ENCODE measurements at regions of chr19 and their contacts with region 1.

Region 1: GRCh38 chr19:56403764-56404704 is at the start of gene ZNF583:
- DNase-seq: peak; percentile 98
- H3K4me3 ChIP-seq: peak within 1 kb of the TSS; percentile 42 to 81 (median 53)
- H3K27ac ChIP-seq: peak within 1 kb of the TSS; percentile 57
- H3K4me1 ChIP-seq: peaks cover 8% of the 10 kb centered on the region
- H3K27me3 ChIP-seq: no peaks in the 10 kb centered on the region
- CTCF ChIP-seq: no peak
- POLR2A ChIP-seq: peak; percentile 32
- total RNA-seq, gene ZNF583: 2.4 and 4.8 TPM in 2 replicates

Region 2: DNA sequence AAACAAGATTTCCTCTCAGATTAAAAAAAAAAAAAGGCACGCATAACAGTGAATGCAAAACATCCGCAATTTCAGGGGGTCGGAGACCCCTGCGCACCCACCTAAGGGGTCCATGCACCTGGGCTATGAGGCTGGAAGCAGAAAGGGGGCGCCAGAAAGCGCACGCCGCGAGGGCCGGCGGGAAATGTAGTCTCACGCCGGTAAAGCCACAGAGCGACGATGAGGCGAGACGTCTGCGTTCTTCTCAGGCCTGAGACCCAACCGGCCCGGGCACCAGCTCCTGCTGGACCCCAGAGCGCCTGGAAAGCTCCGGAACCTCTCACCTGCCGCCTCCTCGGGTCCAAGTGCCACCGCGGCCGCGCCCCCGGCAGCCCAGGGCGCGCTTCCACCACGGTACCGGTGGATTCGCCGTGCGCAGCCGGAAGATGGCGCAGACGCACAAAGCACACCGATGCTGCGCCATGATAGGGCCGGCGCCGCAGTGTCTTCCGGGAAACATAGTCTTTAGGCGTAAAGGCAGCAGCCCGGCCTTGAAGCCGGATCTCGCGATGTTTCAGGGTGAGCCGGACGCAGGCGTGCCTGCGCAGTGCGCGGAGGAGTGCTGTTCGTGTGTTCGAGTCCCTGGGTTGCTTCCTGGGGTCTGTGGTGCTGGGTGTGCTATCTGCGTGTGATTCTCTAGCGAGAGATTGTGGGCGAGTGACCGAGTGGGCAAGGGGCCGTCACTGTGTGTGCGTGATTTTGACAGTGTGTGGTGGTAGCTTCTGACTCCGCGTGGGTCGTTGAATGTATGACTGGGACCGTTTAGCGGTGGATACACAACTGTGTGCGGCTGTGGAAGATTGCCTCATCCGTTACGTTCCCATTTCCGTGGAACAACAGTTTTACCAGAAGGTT is 10.7 kb before region 1 on chr19 and contains the start of gene ZNF582:
- CTCF ChIA-PET with region 1: no interaction called
- POLR2A ChIA-PET with region 1: no interaction called
- dilution Hi-C with region 1: no loop called
- intact Hi-C with region 1: loop called (anchors 1 kb)
- DNase-seq: peak; percentile 94
- H3K4me3 ChIP-seq: peak within 1 kb of the TSS in 2 of 3 experiments; percentile 17 to 64
- H3K27ac ChIP-seq: peak within 1 kb of the TSS; percentile 26
- H3K4me1 ChIP-seq: no peaks in the 10 kb centered on the region
- H3K27me3 ChIP-seq: no peaks in the 10 kb centered on the region
- CTCF ChIP-seq: peak; percentile 75 to 87
- POLR2A ChIP-seq: peak; percentile 70
- total RNA-seq, gene ZNF582: 2.2 and 2.9 TPM in 2 replicates

Region 3: DNA sequence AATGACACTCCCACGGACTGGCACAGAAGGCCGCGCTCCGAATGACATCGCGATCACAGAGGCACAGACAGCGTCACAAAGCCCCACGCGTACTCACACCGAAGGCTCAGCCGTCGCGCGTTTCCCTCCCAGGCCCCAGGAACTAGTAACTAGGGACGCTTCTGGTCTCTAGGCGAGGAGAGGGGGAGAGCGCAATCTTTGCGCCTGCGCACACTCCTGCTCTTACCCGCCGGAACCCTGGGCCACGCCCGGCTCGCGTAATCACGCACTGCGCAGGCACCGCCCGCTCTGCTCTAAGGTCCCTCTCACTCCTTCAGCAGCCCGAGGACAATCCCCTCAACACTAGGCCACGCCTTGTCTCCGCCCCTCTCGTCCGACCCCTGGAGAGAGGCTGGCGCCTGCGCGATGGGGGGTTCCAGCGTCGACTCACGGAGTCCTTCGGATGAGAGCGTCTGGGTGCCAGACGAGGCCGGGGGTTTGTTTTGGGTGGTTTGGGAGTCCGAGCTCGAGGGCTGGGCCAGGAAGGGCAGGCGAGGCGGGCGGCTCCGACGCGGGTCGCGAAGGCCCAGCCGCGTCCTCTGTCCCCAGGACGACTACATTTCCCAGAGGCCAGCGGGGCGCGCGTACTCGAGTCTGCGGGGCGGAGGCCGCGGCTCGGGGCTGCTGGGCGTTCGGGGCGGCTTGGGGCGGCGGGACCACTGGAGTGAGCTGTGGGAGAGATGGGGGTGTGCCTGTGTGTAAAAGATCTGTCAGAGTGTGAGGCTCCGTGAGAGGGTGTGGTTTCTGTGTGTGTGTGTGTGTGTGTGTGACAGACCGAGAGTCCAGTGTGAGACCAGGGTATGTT is 103.6 kb after region 1 on chr19 and contains the start of gene ZNF471:
- CTCF ChIA-PET with region 1: no interaction called
- POLR2A ChIA-PET with region 1: no interaction called
- dilution Hi-C with region 1: no loop called
- intact Hi-C with region 1: loop called (anchors 1 kb)
- DNase-seq: peak; percentile 99
- H3K4me3 ChIP-seq: peak within 1 kb of the TSS; percentile 44 to 78 (median 61)
- H3K27ac ChIP-seq: peak within 1 kb of the TSS; percentile 70
- H3K4me1 ChIP-seq: peaks cover 3% of the 10 kb centered on the region
- H3K27me3 ChIP-seq: no peaks in the 10 kb centered on the region
- CTCF ChIP-seq: no peak
- POLR2A ChIP-seq: no peak
- total RNA-seq, gene ZNF471: 2.0 and 3.1 TPM in 2 replicates